T-cell (primary cell): ENCODE measurements at regions of chr1 and their contacts with region 1.

Region 1: DNA sequence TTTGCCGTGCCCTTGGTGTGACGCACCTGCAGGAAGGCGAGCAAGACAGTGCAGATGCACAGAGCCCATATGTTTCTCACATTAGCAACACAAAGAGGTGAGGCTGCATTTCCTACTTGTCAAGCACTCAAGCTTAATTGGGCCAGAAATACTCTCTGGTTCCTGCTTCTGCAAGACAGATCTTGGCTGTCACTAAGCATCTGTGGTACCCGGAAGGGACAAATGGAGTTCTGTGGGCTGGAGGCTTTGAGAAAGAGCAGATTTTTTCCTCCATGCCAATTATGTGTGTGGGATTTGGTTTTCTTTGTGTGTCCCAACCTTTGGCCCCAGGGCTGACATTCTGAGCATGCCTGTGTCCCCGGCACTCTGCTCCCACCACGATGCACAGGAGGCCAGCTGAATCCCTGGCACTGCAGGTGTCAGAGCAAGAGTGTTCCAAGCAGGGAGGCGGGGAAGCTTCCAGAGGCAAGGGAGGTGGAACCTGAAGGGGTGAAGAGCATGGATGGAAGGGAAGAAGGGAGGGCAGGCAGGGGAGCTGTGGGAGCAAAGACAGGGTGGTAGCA is 52.0 kb upstream of the STUM start:
- DNase-seq: no peak
- ATAC-seq: no peak
- H3K4me3 ChIP-seq: no peak overlapping the region
- H3K4me3 Mint-ChIP-seq: no peak overlapping the region
- H3K27ac ChIP-seq: no peak overlapping the region
- H3K27ac Mint-ChIP-seq: no peak overlapping the region
- H3K4me1 ChIP-seq: no peaks in the 10 kb centered on the region
- H3K4me1 Mint-ChIP-seq: no peaks in the 10 kb centered on the region
- H3K27me3 ChIP-seq: peaks cover 0 to 24% of the 10 kb centered on the region in 2 experiments
- H3K27me3 Mint-ChIP-seq: peaks cover 0 to 5% of the 10 kb centered on the region in 2 donors

Region 2: GRCh38 chr1:227372726-227373130 is 876.2 kb after region 1 on chr1:
- CTCF ChIA-PET with region 1: no interaction called
- POLR2A ChIA-PET with region 1: no interaction called
- DNase-seq: no peak
- ATAC-seq: no peak
- H3K4me3 ChIP-seq: no peak overlapping the region
- H3K4me3 Mint-ChIP-seq: no peak overlapping the region
- H3K27ac ChIP-seq: no peak overlapping the region
- H3K27ac Mint-ChIP-seq: no peak overlapping the region
- H3K4me1 ChIP-seq: no peaks in the 10 kb centered on the region
- H3K4me1 Mint-ChIP-seq: no peaks in the 10 kb centered on the region
- H3K27me3 ChIP-seq: peaks cover 0 to 5% of the 10 kb centered on the region in 2 experiments
- H3K27me3 Mint-ChIP-seq: peaks cover 8 to 9% of the 10 kb centered on the region in 2 donors

Region 3: GRCh38 chr1:228486596-228487335 is 1990.2 kb after region 1 on chr1:
- CTCF ChIA-PET with region 1: interaction called in 1 of 2 experiments, 11 read pairs
- POLR2A ChIA-PET with region 1: no interaction called
- DNase-seq: peak; percentile 59 to 87 (median 75)
- ATAC-seq: peak; percentile 72 to 78 (median 78)
- H3K4me3 ChIP-seq: peak overlapping the region; percentile 97 to 98
- H3K4me3 Mint-ChIP-seq: peak overlapping the region; percentile 93 to 97 (median 95)
- H3K27ac ChIP-seq: peak overlapping the region; percentile 100
- H3K27ac Mint-ChIP-seq: peak overlapping the region; percentile 100
- H3K4me1 ChIP-seq: peaks cover 2 to 48% of the 10 kb centered on the region in 2 experiments
- H3K4me1 Mint-ChIP-seq: peaks cover 31 to 44% (median 37%) of the 10 kb centered on the region in 3 donors
- H3K27me3 ChIP-seq: no peaks in the 10 kb centered on the region
- H3K27me3 Mint-ChIP-seq: no peaks in the 10 kb centered on the region